Right ventricle myocardium inferior (tissue), 1 donor: ENCODE measurements at regions of chr1 and their contacts with region 1.

Region 1: DNA sequence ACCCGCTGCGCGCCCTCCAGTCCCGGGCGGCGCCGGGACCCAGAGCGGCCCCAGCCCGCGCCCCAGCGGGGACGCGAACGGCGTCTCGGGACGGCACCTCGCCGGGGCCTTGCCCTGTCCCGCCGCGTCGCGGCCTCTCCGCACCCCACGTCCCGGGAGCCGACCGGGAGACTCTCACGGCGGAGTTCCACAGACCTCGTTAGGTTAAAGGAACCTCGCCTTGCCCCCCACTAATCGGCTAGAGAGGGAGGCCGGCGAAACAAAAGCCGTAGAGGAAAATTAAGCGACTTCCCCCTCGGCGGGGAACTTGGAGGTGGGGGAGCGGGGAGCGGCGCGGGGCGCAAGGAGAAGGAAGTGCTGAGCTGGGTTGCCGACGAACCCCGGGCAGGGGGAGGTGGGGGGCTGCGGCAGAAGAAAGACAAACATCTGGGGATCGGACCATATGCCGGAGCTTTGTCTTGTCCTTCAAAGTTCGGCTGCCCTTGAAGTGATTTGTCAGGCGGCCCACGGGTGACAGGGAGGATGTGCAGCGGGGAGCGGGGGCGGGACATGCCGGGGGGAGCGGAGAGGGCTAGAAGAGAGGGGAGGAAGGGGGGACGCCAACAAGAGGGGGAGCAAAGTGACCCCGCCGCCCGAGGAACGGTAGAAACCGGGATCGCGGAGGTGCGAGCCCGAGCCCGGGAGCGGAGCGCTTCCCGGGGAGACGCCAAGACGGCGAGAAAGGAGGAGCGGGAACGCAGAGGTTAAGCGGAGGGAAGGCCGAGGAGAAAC is 120.0 kb upstream of the RRP15 start:
- DNase-seq: no peak
- ATAC-seq: peak; percentile 79

Region 2: GRCh38 chr1:217892750-217893149 is 272.4 kb before region 1 on chr1:
- intact Hi-C with region 1: loop called (anchors 5 kb)
- DNase-seq: no peak
- ATAC-seq: no peak